ENCODE measurements at regions of chr2 and their contacts with region 1.

Region 1: DNA sequence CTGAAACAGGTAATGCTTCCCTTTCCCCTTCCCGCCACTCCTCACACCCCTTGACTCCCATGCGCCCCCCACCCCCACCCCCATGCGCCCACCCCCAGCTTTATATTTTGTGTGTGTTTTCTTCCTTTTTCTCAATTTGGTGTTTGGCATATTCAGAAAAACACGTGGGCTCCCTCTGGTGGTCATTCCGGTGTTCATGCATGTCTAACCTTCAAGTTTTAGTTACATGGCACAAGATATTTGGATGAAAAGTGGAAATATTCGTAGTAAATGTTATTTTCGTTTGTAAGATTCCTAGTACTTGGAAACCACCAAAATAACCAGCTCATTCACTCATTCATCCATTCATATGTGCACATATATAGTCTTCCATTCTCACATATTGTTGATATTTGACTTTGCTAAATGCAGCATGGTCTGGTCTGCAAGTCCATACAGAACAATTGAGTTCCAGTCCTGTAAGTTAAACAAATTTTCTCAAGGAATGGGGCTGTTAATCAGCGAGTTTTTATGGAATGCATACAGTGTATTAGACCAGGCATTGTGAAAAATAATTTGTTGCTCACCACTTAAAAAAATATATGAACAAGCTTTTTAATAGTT is 143.6 kb upstream of the MAP3K20 start:
- DNase-seq: peak; percentile 49
- H3K4me3 ChIP-seq: no peak overlapping the region
- H3K27ac ChIP-seq: no peak overlapping the region
- H3K27me3 ChIP-seq: no peaks in the 10 kb centered on the region
- CTCF ChIP-seq: peak; percentile 78

Region 2: DNA sequence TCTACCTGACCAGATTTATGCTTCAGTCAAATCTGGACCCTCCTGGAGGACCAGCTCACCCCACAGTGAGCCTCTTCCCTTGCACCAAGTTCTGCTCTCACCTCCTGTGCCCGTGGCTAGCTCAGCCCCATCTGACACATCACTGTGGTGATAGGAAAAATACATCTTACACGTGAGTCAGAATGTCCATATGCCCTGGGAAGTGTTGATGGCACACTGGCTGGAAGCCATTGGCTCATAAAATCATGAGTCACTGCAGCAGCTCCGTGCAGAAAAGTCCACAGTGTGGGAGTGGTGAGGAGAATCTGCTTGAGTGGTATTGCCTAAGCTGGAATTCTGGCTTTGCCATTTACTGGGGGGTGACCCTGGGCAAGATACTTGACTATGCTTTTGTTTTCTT is 239.0 kb before region 1 on chr2:
- CTCF ChIA-PET with region 1: no interaction called
- POLR2A ChIA-PET with region 1: no interaction called
- DNase-seq: peak; percentile 92
- H3K4me3 ChIP-seq: no peak overlapping the region
- H3K27ac ChIP-seq: peak overlapping the region; percentile 3
- H3K27me3 ChIP-seq: no peaks in the 10 kb centered on the region
- CTCF ChIP-seq: no peak

Region 3: GRCh38 chr2:172829229-172829628 is 102.8 kb before region 1 on chr2:
- CTCF ChIA-PET with region 1: interaction called, 22 read pairs
- POLR2A ChIA-PET with region 1: no interaction called
- DNase-seq: peak; percentile 69
- H3K4me3 ChIP-seq: no peak overlapping the region
- H3K27ac ChIP-seq: no peak overlapping the region
- H3K27me3 ChIP-seq: no peaks in the 10 kb centered on the region
- CTCF ChIP-seq: no peak

Region 4: DNA sequence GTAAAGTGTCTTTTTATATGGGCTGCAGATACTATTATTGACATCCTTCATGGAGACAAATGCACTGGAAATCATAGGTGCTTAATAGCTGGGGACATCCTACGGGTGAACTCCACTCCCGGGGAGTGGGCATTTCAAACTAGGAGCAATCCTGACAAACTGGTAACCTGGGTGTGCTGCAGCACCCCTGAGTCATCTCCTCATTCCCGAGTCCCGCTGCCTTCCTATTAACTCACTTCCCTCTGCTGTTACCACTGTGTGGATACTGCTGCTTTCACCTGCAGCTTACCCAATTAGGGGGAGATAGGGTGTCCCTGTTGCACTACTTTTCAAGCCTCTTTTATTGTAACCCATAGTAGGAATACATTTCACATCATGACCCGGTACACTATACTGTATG is 62.2 kb before region 1 on chr2:
- CTCF ChIA-PET with region 1: interaction called, 52 read pairs
- POLR2A ChIA-PET with region 1: no interaction called
- DNase-seq: no peak
- H3K4me3 ChIP-seq: no peak overlapping the region
- H3K27ac ChIP-seq: no peak overlapping the region
- H3K27me3 ChIP-seq: no peaks in the 10 kb centered on the region
- CTCF ChIP-seq: no peak

Region 5: DNA sequence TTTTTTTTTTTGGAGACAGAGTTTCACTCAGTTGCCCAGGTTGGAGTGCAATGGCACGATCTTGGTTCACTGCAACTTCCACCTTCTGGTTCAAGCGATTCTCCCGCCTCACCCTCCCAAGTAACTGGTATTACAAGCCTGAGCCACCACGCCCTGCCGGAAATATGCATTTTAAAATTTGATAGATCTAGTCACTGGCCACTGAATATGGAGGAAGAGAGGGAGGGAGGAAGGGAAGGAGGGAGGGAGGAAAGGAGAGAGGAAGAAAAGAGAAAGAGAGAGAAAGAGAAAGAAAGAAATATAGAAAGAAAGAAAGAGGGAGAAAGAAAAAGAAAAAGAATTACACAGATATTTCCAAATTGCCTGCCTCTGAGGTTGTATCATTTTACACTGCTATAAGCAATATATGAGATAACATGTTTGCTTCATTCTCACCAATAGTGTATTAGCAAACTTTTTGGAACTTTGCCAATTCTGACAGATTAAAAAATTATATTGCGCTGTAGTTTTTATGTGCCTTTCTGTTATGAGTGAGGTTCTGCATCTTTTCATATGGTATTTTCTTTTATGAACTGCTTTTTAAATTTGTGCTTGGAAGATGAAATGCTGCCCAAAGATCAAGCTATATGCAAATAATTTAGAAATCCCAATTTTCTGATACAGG is 17.5 kb before region 1 on chr2:
- CTCF ChIA-PET with region 1: interaction called, 16 read pairs
- POLR2A ChIA-PET with region 1: no interaction called
- DNase-seq: no peak
- H3K4me3 ChIP-seq: no peak overlapping the region
- H3K27ac ChIP-seq: no peak overlapping the region
- H3K27me3 ChIP-seq: peaks cover 5% of the 10 kb centered on the region
- CTCF ChIP-seq: no peak

Region 6: DNA sequence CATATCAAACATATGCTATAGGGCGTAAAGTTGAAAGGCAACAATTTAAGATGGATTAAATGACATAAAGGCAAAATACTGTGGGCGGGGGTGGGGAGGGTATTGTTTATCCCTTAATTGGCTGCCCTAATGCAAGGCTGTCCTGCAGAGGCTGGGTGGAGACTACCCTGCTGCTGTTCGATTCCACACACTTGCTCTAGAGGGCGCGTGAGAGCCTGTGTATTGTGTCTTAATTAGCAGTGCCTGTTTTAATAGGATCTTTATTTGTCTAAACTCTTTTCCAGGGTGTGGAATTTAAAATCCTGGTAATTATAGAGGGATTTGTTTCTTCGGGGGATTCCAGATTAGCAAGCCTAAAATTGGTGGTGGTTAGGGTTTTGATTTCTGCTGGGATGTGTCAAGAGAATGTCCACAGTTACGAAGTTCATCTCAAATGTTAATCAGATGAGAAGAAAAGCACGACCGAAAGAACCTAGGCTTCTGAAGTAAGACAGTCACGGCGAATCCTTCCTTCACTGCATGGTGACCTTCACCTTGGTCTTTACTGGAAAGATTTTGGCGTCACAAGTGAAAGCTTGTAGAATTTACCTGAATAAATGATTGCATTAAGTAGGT is 40.1 kb after region 1 on chr2:
- CTCF ChIA-PET with region 1: interaction called, 13 read pairs
- POLR2A ChIA-PET with region 1: no interaction called
- DNase-seq: no peak
- H3K4me3 ChIP-seq: no peak overlapping the region
- H3K27ac ChIP-seq: no peak overlapping the region
- H3K27me3 ChIP-seq: no peaks in the 10 kb centered on the region
- CTCF ChIP-seq: peak; percentile 91

Region 7: DNA sequence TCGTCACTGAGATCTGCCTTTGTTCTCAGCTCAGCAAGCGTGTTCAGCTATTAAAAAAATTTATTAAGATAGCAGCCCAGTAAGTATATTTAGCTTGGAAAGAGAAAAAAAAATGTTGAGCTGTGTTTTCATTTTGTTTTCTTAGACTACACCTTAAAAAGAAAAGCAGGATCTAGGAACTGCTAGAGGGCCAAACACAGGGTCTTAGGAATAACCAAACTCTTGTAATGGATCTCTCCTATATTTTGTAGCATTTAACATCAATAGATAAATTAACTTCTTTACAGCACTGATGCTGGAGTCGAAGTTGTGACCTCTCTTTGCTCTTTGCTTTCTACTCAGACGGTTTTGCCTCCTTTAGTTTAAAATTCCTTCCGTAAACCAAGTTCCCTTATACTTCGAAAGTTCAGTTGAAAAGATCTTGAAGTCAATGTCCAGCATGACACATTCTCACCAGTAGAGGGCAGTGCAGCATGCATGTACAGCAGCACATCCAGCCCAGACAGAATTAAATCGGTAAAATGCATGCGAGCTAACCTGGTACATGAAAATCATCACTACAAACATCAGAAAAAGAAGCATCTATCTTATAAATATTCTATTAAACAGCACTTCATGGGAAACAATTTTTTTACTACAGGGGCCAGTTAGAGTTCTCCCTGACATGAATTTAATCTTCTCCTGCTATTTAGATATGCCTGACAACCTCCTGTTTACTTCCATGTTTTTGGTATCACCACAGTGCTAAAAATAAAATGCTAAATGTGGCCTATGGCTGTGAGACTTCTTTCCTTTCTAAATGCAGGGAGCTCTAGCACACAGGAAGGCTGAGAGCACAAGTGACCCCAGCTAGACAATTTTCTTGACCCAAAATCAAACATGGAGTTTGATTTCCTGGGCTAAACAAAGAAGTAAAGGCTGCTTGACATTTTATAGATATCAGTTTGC is 95.4 kb after region 1 on chr2:
- CTCF ChIA-PET with region 1: interaction called, 15 read pairs
- POLR2A ChIA-PET with region 1: no interaction called
- DNase-seq: peak; percentile 84
- H3K4me3 ChIP-seq: no peak overlapping the region
- H3K27ac ChIP-seq: no peak overlapping the region
- H3K27me3 ChIP-seq: no peaks in the 10 kb centered on the region
- CTCF ChIP-seq: peak; percentile 89